ENCODE measurements at regions of chr6 and their contacts with region 1.

Region 1: DNA sequence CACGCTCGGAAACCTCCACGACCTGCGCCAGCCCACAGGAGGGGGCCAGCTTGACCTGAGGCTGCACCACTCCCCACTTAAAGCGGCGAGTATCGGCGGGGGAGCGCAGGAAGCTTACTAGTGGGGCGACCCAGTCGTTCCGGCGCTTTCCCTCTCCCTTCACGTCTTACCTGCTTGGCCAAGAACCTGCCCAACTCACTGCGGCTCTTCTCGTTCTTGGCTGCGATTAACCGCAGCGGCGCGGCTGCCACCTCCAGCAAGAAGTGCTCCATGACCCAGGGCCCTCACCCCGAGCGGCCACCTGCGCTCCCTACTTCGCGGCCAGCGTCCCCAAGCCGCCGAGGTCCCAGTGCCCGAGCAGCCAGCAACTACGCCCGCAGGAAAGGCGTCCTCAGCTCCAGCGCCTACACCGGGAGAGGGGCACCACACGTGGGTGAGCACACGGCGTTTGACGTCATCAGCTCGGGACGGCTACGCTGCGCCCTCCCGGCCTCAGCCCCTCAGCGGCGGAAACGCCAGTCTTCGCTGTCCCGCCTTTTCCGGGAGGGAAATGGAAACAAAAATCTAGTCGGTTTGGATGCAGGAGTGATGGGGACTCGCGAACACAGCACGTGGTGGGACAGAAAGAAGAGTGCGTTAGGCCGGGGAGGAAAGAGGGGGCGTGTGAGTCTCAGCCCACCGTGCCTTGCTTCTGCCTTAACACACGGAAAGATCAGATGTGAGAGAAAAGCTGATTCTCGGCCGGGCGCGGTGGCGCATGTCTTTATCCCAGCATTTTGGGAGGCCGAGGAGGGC is at the start of gene MDN1:
- DNase-seq: peak; percentile 97
- H3K4me3 Mint-ChIP-seq: peak within 1 kb of the TSS; percentile 96
- H3K27ac Mint-ChIP-seq: peak within 1 kb of the TSS; percentile 98
- H3K4me1 Mint-ChIP-seq: peaks cover 21% of the 10 kb centered on the region
- H3K27me3 Mint-ChIP-seq: no peaks in the 10 kb centered on the region
- total RNA-seq, gene MDN1: 75.9 and 78.3 TPM in 2 replicates

Region 2: GRCh38 chr6:89829591-89830385 is 10.3 kb after region 1 on chr6 and contains the start of gene CASP8AP2:
- intact Hi-C with region 1: loop called (anchors 1 kb)
- DNase-seq: peak; percentile 98
- H3K4me3 Mint-ChIP-seq: peak within 1 kb of the TSS; percentile 99
- H3K27ac Mint-ChIP-seq: peak within 1 kb of the TSS; percentile 98
- H3K4me1 Mint-ChIP-seq: peaks cover 25% of the 10 kb centered on the region
- H3K27me3 Mint-ChIP-seq: no peaks in the 10 kb centered on the region
- total RNA-seq, gene CASP8AP2: 37.3 and 37.8 TPM in 2 replicates

Region 3: GRCh38 chr6:89834884-89835792 is 15.6 kb after region 1 on chr6:
- intact Hi-C with region 1: loop called (anchors 2 kb)
- DNase-seq: peak; percentile 78
- H3K4me3 Mint-ChIP-seq: peak overlapping the region; percentile 68
- H3K27ac Mint-ChIP-seq: peak overlapping the region; percentile 92
- H3K4me1 Mint-ChIP-seq: peaks cover 47% of the 10 kb centered on the region
- H3K27me3 Mint-ChIP-seq: no peaks in the 10 kb centered on the region

Region 4: GRCh38 chr6:89940225-89941027 is 120.9 kb after region 1 on chr6:
- intact Hi-C with region 1: no loop called
- DNase-seq: peak; percentile 91
- H3K4me3 Mint-ChIP-seq: no peak overlapping the region
- H3K27ac Mint-ChIP-seq: peak overlapping the region; percentile 41
- H3K4me1 Mint-ChIP-seq: peaks cover 34% of the 10 kb centered on the region
- H3K27me3 Mint-ChIP-seq: no peaks in the 10 kb centered on the region